ENCODE measurements at regions of chr11 and their contacts with region 1.

Region 1: GRCh38 chr11:17230867-17231851 is 23.4 kb upstream of the PIK3C2A start:
- DNase-seq: peak in 2 of 9 experiments; percentile 34 to 64
- ATAC-seq: peak; percentile 81
- H3K4me3 ChIP-seq: no peak overlapping the region
- H3K4me3 Mint-ChIP-seq: no peak overlapping the region
- H3K27ac ChIP-seq: no peak overlapping the region
- H3K27ac Mint-ChIP-seq: no peak overlapping the region
- H3K4me1 ChIP-seq: peaks cover 5% of the 10 kb centered on the region
- H3K4me1 Mint-ChIP-seq: peaks cover 13% of the 10 kb centered on the region
- H3K27me3 ChIP-seq: no peaks in the 10 kb centered on the region
- H3K27me3 Mint-ChIP-seq: no peaks in the 10 kb centered on the region
- CTCF ChIP-seq: no peak

Region 2: GRCh38 chr11:17298302-17298701 is 67.1 kb after region 1 on chr11:
- CTCF ChIA-PET with region 1: interaction called, 6 read pairs
- POLR2A ChIA-PET with region 1: no interaction called
- intact Hi-C with region 1: loop called in 1 of 2 experiments (anchors 5 kb)
- DNase-seq: peak in 1 of 9 experiments; percentile 37
- ATAC-seq: peak; percentile 67
- H3K4me3 ChIP-seq: no peak overlapping the region
- H3K4me3 Mint-ChIP-seq: no peak overlapping the region
- H3K27ac ChIP-seq: no peak overlapping the region
- H3K27ac Mint-ChIP-seq: peak overlapping the region; percentile 82
- H3K4me1 ChIP-seq: peaks cover 11% of the 10 kb centered on the region
- H3K4me1 Mint-ChIP-seq: peaks cover 39% of the 10 kb centered on the region
- H3K27me3 ChIP-seq: no peaks in the 10 kb centered on the region
- H3K27me3 Mint-ChIP-seq: no peaks in the 10 kb centered on the region
- CTCF ChIP-seq: no peak

Region 3: GRCh38 chr11:17528181-17528691 is 297.1 kb after region 1 on chr11:
- CTCF ChIA-PET with region 1: interaction called, 13 read pairs
- POLR2A ChIA-PET with region 1: no interaction called
- intact Hi-C with region 1: loop called (anchors 1 kb)
- DNase-seq: peak in 6 of 9 experiments; percentile 15 to 60 (median 35)
- ATAC-seq: peak; percentile 55
- H3K4me3 ChIP-seq: no peak overlapping the region
- H3K4me3 Mint-ChIP-seq: no peak overlapping the region
- H3K27ac ChIP-seq: no peak overlapping the region
- H3K27ac Mint-ChIP-seq: no peak overlapping the region
- H3K4me1 ChIP-seq: no peaks in the 10 kb centered on the region
- H3K4me1 Mint-ChIP-seq: no peaks in the 10 kb centered on the region
- H3K27me3 ChIP-seq: no peaks in the 10 kb centered on the region
- H3K27me3 Mint-ChIP-seq: peaks cover 5% of the 10 kb centered on the region
- CTCF ChIP-seq: peak; percentile 34

Region 4: GRCh38 chr11:19071255-19071654 is 1840.1 kb after region 1 on chr11:
- CTCF ChIA-PET with region 1: no interaction called
- POLR2A ChIA-PET with region 1: no interaction called
- intact Hi-C with region 1: no loop called
- DNase-seq: peak in 8 of 9 experiments; percentile 15 to 81 (median 46)
- ATAC-seq: peak; percentile 90
- H3K4me3 ChIP-seq: no peak overlapping the region
- H3K4me3 Mint-ChIP-seq: peak overlapping the region; percentile 38
- H3K27ac ChIP-seq: no peak overlapping the region
- H3K27ac Mint-ChIP-seq: no peak overlapping the region
- H3K4me1 ChIP-seq: peaks cover 4% of the 10 kb centered on the region
- H3K4me1 Mint-ChIP-seq: peaks cover 5% of the 10 kb centered on the region
- H3K27me3 ChIP-seq: no peaks in the 10 kb centered on the region
- H3K27me3 Mint-ChIP-seq: peaks cover 18% of the 10 kb centered on the region
- CTCF ChIP-seq: peak; percentile 90